Vagina (tissue), 2 donors: ENCODE measurements at regions of chr2 and their contacts with region 1.

Region 1: GRCh38 chr2:150595803-150596470 is 108.5 kb upstream of the RND3 start:
- DNase-seq: no peak
- H3K4me3 ChIP-seq: no peak overlapping the region
- H3K27ac ChIP-seq: no peak overlapping the region
- H3K4me1 ChIP-seq: no peaks in the 10 kb centered on the region
- H3K27me3 ChIP-seq: no peaks in the 10 kb centered on the region
- CTCF ChIP-seq: no peak
- POLR2A ChIP-seq: no peak

Region 2: DNA sequence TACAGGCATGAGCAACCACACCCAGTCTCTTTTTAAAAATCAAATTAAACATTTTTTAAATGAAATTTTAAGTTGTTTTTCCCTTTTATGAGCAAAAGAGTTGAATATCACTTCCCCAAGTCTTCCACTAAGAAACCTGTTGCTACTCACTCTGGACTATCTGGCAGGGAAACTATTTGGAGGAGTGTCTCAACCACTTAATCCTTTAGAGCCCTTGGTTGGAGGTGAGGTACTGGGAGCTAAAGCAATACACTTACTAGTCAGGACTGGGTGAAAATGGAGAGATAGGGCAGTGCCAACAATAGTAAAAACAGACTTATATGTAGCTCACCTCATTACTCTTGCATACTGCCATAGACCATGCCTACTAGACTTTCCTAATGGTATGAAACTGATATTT is 244.0 kb before region 1 on chr2:
- intact Hi-C with region 1: no loop called
- DNase-seq: no peak
- H3K4me3 ChIP-seq: no peak overlapping the region
- H3K27ac ChIP-seq: no peak overlapping the region
- H3K4me1 ChIP-seq: no peaks in the 10 kb centered on the region
- H3K27me3 ChIP-seq: no peaks in the 10 kb centered on the region
- CTCF ChIP-seq: no peak
- POLR2A ChIP-seq: no peak

Region 3: GRCh38 chr2:150624001-150624401 is 28.1 kb after region 1 on chr2:
- intact Hi-C with region 1: loop called (anchors 2 kb)
- DNase-seq: no peak
- H3K4me3 ChIP-seq: no peak overlapping the region
- H3K27ac ChIP-seq: no peak overlapping the region
- H3K4me1 ChIP-seq: no peaks in the 10 kb centered on the region
- H3K27me3 ChIP-seq: no peaks in the 10 kb centered on the region
- CTCF ChIP-seq: no peak
- POLR2A ChIP-seq: no peak